ENCODE measurements at regions of chr10 and their contacts with region 1.

Region 1: GRCh38 chr10:97659589-97659988 is 19.1 kb downstream of the PI4K2A start:
- DNase-seq: no peak
- H3K4me3 Mint-ChIP-seq: no peak overlapping the region
- H3K27ac Mint-ChIP-seq: no peak overlapping the region
- H3K4me1 Mint-ChIP-seq: no peaks in the 10 kb centered on the region
- H3K27me3 Mint-ChIP-seq: no peaks in the 10 kb centered on the region

Region 2: DNA sequence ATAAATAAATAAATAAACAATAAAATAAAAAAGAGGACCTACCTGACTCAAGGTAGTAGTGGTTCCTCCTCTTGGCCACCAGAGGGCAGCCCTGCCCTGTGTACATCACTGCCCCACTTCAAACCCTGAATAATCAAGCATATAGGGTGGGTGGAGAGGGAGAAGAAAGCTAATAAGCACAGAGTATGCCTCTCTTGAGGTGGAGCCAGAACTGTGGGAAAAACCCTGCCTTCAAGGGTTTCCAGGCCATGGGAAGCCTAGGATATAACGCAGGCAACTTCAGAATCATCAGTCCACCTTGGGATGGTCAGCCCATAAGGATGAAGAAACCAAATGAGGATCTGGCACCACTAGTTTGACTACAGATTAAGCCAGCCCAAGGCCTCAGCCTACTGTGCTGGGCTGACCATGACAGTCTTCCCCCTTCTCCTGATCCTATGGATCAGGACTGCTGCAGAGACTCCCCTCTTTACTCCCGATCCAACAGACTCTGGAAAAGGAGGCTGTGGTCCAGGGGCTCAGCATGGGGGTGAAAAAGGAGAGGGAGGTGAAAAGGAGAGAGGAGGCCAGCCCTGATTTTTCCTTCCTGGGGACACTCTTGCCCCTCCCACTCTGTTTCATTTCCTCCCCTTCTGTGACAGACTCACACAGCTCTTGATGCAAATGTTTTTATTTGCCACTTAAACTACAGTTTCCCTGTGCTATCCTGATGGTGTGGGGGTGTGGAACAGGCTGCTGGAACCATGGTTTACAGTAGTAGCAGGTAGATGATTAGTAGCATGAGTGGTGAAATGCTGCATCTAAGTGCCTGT is 17.4 kb after region 1 on chr10:
- CTCF ChIA-PET with region 1: interaction called, 10 read pairs
- POLR2A ChIA-PET with region 1: interaction called, 3 read pairs
- DNase-seq: peak; percentile 52
- H3K4me3 Mint-ChIP-seq: no peak overlapping the region
- H3K27ac Mint-ChIP-seq: no peak overlapping the region
- H3K4me1 Mint-ChIP-seq: peaks cover 17% of the 10 kb centered on the region
- H3K27me3 Mint-ChIP-seq: no peaks in the 10 kb centered on the region